Activated CD8-positive, alpha-beta T cell treated with anti-CD3 and anti-CD28 coated beads for 36 hours (primary cell): ENCODE measurements at regions of chr1 and their contacts with region 1.

Region 1: DNA sequence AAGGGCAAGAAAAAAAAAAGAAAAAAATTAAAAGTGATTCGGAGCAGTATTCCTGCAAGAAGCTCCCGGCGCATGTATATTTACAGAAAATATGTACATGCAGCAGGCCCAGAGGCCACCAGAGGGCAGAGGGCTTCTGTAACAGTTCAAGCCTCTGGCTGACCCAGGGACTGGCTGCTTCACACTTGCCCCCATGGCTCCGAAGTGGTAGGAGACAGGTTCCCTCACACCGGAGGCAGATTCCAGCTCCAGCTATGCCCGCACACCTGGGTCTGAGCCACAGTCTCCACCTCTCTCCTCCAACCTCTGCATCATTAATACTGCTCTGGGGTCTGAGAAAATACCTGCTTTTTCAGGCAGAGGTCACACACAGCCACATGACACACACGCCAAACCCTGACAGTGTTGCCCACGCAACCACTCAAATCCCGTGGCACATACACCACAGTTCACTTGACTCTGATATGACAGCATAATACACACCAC is 2.2 kb upstream of the ARHGAP30 start:
- DNase-seq: peak; percentile 81
- ATAC-seq: no peak
- H3K4me3 Mint-ChIP-seq: no peak overlapping the region
- H3K27ac Mint-ChIP-seq: peak overlapping the region; percentile 30
- H3K4me1 Mint-ChIP-seq: peaks cover 34% of the 10 kb centered on the region
- H3K27me3 Mint-ChIP-seq: no peaks in the 10 kb centered on the region
- CTCF ChIP-seq: peak; percentile 81

Region 2: GRCh38 chr1:161045750-161046571 is 26.0 kb before region 1 on chr1 and contains the start of gene USF1:
- CTCF ChIA-PET with region 1: interaction called, 16 read pairs
- POLR2A ChIA-PET with region 1: interaction called, 99 read pairs
- intact Hi-C with region 1: no loop called
- DNase-seq: peak; percentile 96
- ATAC-seq: peak; percentile 83
- H3K4me3 Mint-ChIP-seq: peak within 1 kb of the TSS; percentile 84
- H3K27ac Mint-ChIP-seq: peak within 1 kb of the TSS; percentile 98
- H3K4me1 Mint-ChIP-seq: peaks cover 36% of the 10 kb centered on the region
- H3K27me3 Mint-ChIP-seq: no peaks in the 10 kb centered on the region
- CTCF ChIP-seq: no peak
- total RNA-seq, gene USF1: 50.0 to 52.1 TPM

Region 3: GRCh38 chr1:161054805-161055204 is 17.1 kb before region 1 on chr1:
- CTCF ChIA-PET with region 1: interaction called, 10 read pairs
- POLR2A ChIA-PET with region 1: interaction called, 5 read pairs
- intact Hi-C with region 1: no loop called
- DNase-seq: no peak
- ATAC-seq: no peak
- H3K4me3 Mint-ChIP-seq: no peak overlapping the region
- H3K27ac Mint-ChIP-seq: no peak overlapping the region
- H3K4me1 Mint-ChIP-seq: peaks cover 25% of the 10 kb centered on the region
- H3K27me3 Mint-ChIP-seq: no peaks in the 10 kb centered on the region
- CTCF ChIP-seq: no peak

Region 4: GRCh38 chr1:161082991-161083742 is 11.2 kb after region 1 on chr1:
- CTCF ChIA-PET with region 1: interaction called, 16 read pairs
- POLR2A ChIA-PET with region 1: interaction called, 6 read pairs
- intact Hi-C with region 1: no loop called
- DNase-seq: no peak
- ATAC-seq: peak; percentile 55
- H3K4me3 Mint-ChIP-seq: no peak overlapping the region
- H3K27ac Mint-ChIP-seq: no peak overlapping the region
- H3K4me1 Mint-ChIP-seq: no peaks in the 10 kb centered on the region
- H3K27me3 Mint-ChIP-seq: no peaks in the 10 kb centered on the region
- CTCF ChIP-seq: no peak

Region 5: GRCh38 chr1:161089171-161089924 is 17.4 kb after region 1 on chr1 and contains the start of gene NECTIN4:
- CTCF ChIA-PET with region 1: interaction called, 200 read pairs
- POLR2A ChIA-PET with region 1: interaction called, 57 read pairs
- intact Hi-C with region 1: no loop called
- DNase-seq: no peak
- ATAC-seq: no peak
- H3K4me3 Mint-ChIP-seq: no peak within 1 kb of the TSS
- H3K27ac Mint-ChIP-seq: no peak within 1 kb of the TSS
- H3K4me1 Mint-ChIP-seq: peaks cover 42% of the 10 kb centered on the region
- H3K27me3 Mint-ChIP-seq: no peaks in the 10 kb centered on the region
- CTCF ChIP-seq: no peak
- total RNA-seq, gene NECTIN4: not detected

Region 6: DNA sequence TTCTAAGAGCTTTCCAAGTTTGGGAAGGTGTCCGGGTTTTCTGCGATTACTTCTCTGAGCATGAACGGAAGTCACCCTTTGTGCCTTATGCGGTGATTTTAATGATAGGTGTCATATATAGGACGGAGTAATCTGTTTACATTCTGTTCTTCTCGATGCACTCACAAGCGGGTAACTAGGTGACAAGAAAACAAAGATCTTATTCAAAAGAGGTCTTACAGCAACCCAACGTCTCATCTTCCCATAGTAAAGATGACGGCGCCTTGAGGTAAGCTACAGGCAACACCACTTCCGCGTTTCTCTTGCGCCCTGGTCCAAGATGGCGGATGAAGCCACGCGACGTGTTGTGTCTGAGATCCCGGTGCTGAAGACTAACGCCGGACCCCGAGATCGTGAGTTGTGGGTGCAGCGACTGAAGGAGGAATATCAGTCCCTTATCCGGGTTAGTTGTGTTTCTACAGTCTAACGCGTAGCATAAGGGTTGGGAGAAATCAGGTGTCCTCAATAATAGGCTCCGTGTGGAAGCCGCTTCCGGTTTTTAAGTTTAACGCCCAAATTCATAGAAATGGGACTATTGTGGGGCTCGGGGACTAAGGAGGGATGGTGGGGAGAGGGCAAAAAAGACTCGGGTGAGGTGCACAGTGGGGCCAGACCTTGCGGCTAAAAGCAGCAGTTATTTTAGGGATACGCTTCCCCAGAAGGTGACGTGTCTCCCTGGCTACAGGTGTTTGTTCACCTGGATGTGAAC is 81.9 kb after region 1 on chr1 and contains the start of gene UFC1:
- CTCF ChIA-PET with region 1: interaction called, 3 read pairs
- POLR2A ChIA-PET with region 1: interaction called, 20 read pairs
- intact Hi-C with region 1: no loop called
- DNase-seq: peak; percentile 90
- ATAC-seq: peak; percentile 95
- H3K4me3 Mint-ChIP-seq: peak within 1 kb of the TSS; percentile 95
- H3K27ac Mint-ChIP-seq: peak within 1 kb of the TSS; percentile 99
- H3K4me1 Mint-ChIP-seq: peaks cover 19% of the 10 kb centered on the region
- H3K27me3 Mint-ChIP-seq: no peaks in the 10 kb centered on the region
- CTCF ChIP-seq: no peak
- total RNA-seq, gene UFC1: 81.2 to 84.1 TPM